K562 (cell line): ENCODE measurements at regions of chr17 and their contacts with region 1.

Region 1: GRCh38 chr17:7314719-7315569 is at the start of gene GPS2:
- DNase-seq: peak; percentile 77 to 89 (median 82)
- ATAC-seq: peak; percentile 81
- H3K4me3 ChIP-seq: peak within 1 kb of the TSS; percentile 93
- H3K27ac ChIP-seq: peak within 1 kb of the TSS; percentile 75
- H3K4me1 ChIP-seq: peaks cover 14 to 29% of the 10 kb centered on the region in 2 experiments
- H3K27me3 ChIP-seq: no peaks in the 10 kb centered on the region
- CTCF ChIP-seq: no peak
- EP300 ChIP-seq: no peak
- POLR2A ChIP-seq: peak; percentile 73
- RAD21 ChIP-seq: no peak
- polyA plus RNA-seq, gene GPS2: 18.3 to 21.1 TPM

Region 2: DNA sequence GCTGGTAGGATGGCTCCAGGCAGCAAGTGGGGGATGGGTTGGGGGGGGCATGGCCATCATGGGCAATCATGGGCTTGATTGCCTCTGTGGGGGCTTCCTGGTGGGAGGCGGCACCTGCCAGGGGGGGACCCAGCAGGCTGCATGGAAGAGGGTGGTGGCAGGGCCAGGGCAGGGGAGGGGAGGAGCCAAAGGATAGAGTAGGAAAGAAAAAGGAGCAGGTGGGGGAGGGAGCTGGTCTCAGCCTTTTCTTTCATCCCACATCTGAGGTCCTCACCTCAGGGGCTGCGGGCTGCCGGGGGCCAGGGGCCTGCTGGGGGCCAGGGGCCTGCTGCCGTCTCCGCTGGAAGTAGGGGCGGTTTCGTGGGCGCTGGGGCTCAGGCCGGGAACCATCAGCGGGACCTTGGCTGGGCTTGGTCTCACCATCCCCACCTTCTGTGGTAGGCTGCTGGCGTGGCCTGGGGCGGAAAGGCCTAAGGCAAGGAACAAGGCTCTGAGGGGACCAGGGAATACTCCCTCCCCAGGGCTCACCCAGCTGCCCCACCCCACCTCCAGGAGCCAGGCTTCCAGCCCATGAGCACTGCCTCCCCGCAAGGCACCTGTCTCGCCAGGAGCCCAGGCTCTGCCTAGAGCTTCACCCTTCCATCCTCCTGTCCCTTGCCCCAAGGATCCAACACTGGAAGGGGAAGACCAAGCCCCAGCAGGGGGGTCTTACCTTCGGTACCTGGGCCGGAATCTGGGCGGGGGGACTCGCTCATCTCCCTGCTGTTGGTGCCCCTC is 25.5 kb before region 1 on chr17:
- CTCF ChIA-PET with region 1: no interaction called
- POLR2A ChIA-PET with region 1: no interaction called
- in situ Hi-C with region 1: no loop called
- intact Hi-C with region 1: no loop called
- DNase-seq: no peak
- ATAC-seq: no peak
- H3K4me3 ChIP-seq: no peak overlapping the region
- H3K27ac ChIP-seq: no peak overlapping the region
- H3K4me1 ChIP-seq: peaks cover 11 to 33% of the 10 kb centered on the region in 2 experiments
- H3K27me3 ChIP-seq: no peaks in the 10 kb centered on the region
- CTCF ChIP-seq: no peak
- EP300 ChIP-seq: no peak
- POLR2A ChIP-seq: no peak
- RAD21 ChIP-seq: no peak

Region 3: GRCh38 chr17:7329374-7329996 is 14.5 kb after region 1 on chr17:
- CTCF ChIA-PET with region 1: no interaction called
- POLR2A ChIA-PET with region 1: interaction called, 21 read pairs
- in situ Hi-C with region 1: no loop called
- intact Hi-C with region 1: no loop called
- DNase-seq: peak; percentile 93 to 97 (median 95)
- ATAC-seq: peak; percentile 83
- H3K4me3 ChIP-seq: peak overlapping the region; percentile 78
- H3K27ac ChIP-seq: peak overlapping the region; percentile 92
- H3K4me1 ChIP-seq: peaks cover 15 to 37% of the 10 kb centered on the region in 2 experiments
- H3K27me3 ChIP-seq: no peaks in the 10 kb centered on the region
- CTCF ChIP-seq: no peak
- EP300 ChIP-seq: no peak
- POLR2A ChIP-seq: peak; percentile 70
- RAD21 ChIP-seq: no peak

Region 4: DNA sequence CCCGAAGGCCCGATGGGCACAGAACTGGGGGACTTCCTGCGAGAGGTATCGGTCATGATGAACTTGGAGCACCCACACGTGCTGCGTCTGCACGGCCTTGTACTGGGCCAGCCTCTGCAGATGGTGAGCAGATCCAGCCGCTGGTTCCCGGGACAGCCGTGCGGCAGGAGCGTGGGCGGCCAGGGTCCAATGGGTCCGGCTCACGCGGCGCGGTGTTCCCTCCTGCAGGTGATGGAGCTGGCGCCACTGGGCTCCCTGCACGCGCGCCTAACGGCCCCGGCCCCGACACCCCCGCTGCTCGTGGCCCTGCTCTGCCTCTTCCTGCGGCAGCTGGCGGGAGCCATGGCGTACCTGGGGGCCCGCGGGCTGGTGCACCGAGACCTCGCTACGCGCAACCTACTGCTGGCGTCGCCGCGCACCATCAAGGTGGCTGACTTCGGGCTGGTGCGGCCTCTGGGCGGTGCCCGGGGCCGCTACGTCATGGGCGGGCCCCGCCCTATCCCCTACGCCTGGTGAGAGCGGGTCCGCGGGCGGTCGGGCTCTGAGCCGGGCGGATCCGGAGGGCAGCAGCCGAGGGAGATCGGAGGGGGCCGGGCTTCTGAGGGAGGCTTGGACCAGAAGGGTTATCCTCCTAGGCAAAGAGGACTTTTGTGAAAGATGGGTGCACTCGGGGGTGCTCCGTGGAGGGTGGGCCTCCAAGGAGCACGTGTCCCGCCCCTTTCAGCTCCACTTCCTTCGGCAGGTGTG is 69.0 kb after region 1 on chr17:
- CTCF ChIA-PET with region 1: no interaction called
- POLR2A ChIA-PET with region 1: no interaction called
- in situ Hi-C with region 1: no loop called
- intact Hi-C with region 1: no loop called
- DNase-seq: no peak
- ATAC-seq: no peak
- H3K4me3 ChIP-seq: no peak overlapping the region
- H3K27ac ChIP-seq: no peak overlapping the region
- H3K4me1 ChIP-seq: peaks cover 8 to 18% of the 10 kb centered on the region in 2 experiments; a peak in 4 of 5 replicates
- H3K27me3 ChIP-seq: no peaks in the 10 kb centered on the region
- CTCF ChIP-seq: no peak
- EP300 ChIP-seq: no peak
- POLR2A ChIP-seq: no peak
- RAD21 ChIP-seq: no peak